Dorsolateral prefrontal cortex (tissue), 120 donors: ENCODE measurements at regions of chr22 and their contacts with region 1.

Region 1: GRCh38 chr22:36977947-36978660 is 41.1 kb downstream of the TST start:
- DNase-seq: peak; percentile 77 to 92 (median 89)
- H3K4me3 ChIP-seq: peak overlapping the region; percentile 2 to 76 (median 53)
- H3K27ac ChIP-seq: peak overlapping the region in 13 of 59 donors; percentile 3 to 65 (median 32)
- H3K27me3 ChIP-seq: no peaks in the 10 kb centered on the region
- CTCF ChIP-seq: peak; percentile 76 to 99 (median 98)

Region 2: GRCh38 chr22:36546092-36546804 is 431.9 kb before region 1 on chr22:
- intact Hi-C with region 1: loop called (anchors 10 kb)
- DNase-seq: peak in 6 of 10 donors; percentile 43 to 61 (median 58)
- H3K4me3 ChIP-seq: peak overlapping the region in 37 of 59 donors; percentile 2 to 51 (median 31)
- H3K27ac ChIP-seq: no peak overlapping the region
- H3K27me3 ChIP-seq: peaks cover 0 to 7% (median 0%) of the 10 kb centered on the region in 45 donors
- CTCF ChIP-seq: peak in 54 of 56 donors; percentile 46 to 83 (median 70)

Region 3: DNA sequence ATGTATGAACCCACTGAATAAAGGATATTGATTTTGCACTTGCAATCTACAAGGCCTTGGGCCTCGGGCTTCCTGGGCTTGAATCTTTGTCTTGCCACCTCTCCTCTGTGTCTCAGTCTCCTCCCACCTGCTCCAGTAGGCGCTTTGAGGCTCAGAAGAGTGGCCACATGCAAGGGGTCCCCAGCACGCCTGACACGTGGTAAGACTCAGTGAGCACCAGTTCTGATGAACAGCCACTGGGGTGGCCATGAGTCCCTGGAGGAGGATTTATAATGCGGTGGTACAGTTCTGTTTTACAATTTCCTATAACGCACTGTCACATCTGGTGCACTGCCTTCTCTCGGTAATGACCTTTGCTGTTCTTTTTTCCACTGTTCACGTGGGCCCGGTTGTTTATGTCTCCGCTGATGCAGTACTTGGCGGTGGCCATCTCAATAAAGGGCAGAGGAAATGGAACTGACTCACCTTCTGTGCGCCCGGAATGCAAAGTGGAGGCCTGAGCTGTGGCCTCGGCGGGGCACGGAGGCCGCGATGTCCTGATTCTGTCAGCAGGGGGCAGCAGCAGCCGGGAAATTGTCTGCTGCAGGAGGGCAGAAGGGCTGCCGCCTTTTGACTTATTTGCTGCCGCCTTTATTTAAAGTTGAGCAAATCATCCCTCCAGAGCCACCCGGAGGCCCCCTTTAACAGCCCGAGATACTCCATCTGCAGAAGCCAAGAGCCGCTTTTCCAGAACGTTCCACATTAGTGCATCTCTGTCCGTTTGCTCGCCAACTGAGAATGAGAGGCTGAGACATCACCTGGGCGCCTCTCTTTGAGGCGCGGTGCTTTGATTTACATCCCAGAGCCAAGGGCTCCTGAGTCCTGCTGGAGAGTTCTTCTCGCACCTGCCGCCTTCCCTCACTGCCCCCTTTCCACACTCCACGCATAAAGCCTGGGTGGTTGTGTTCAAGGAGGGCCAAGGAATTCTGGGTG is 196.2 kb before region 1 on chr22:
- intact Hi-C with region 1: loop called (anchors 2 to 5 kb)
- DNase-seq: peak; percentile 61 to 85 (median 73)
- H3K4me3 ChIP-seq: peak overlapping the region in 1 of 59 donors; percentile 5
- H3K27ac ChIP-seq: peak overlapping the region in 2 of 59 donors; percentile 40 to 48
- H3K27me3 ChIP-seq: peaks cover 0 to 11% (median 0%) of the 10 kb centered on the region in 45 donors
- CTCF ChIP-seq: peak; percentile 71 to 99 (median 95)

Region 4: GRCh38 chr22:36856121-36856791 is 121.8 kb before region 1 on chr22:
- intact Hi-C with region 1: loop called (anchors 1 to 5 kb)
- DNase-seq: peak; percentile 82 to 93 (median 89)
- H3K4me3 ChIP-seq: peak overlapping the region in 6 of 59 donors; percentile 2 to 30 (median 22)
- H3K27ac ChIP-seq: no peak overlapping the region
- H3K27me3 ChIP-seq: peaks cover 0 to 5% (median 0%) of the 10 kb centered on the region in 45 donors
- CTCF ChIP-seq: peak; percentile 98 to 100 (median 100)

Region 5: GRCh38 chr22:37019309-37020125 is 41.4 kb after region 1 on chr22 and contains the starts of genes MPST and TST:
- intact Hi-C with region 1: loop called in 1 of 2 experiments (anchors 2 kb)
- DNase-seq: peak; percentile 48 to 87 (median 77)
- H3K4me3 ChIP-seq: peak within 1 kb of the TSS; percentile 64 to 98 (median 88)
- H3K27ac ChIP-seq: peak within 1 kb of the TSS; percentile 66 to 98 (median 93)
- H3K27me3 ChIP-seq: no peaks in the 10 kb centered on the region
- CTCF ChIP-seq: peak in 12 of 56 donors; percentile 5 to 30 (median 14)
- total RNA-seq, gene MPST: 12.8 to 46.5 (median 22.4) TPM
- total RNA-seq, gene TST: 8.8 to 40.3 (median 19.7) TPM

Region 6: GRCh38 chr22:37045958-37046357 is 67.9 kb after region 1 on chr22:
- intact Hi-C with region 1: loop called in 1 of 2 experiments (anchors 5 kb)
- DNase-seq: no peak
- H3K4me3 ChIP-seq: no peak overlapping the region
- H3K27ac ChIP-seq: no peak overlapping the region
- H3K27me3 ChIP-seq: no peaks in the 10 kb centered on the region
- CTCF ChIP-seq: peak in 54 of 56 donors; percentile 26 to 65 (median 42)